ENCODE measurements at regions of chr15 and their contacts with region 1.

Region 1: DNA sequence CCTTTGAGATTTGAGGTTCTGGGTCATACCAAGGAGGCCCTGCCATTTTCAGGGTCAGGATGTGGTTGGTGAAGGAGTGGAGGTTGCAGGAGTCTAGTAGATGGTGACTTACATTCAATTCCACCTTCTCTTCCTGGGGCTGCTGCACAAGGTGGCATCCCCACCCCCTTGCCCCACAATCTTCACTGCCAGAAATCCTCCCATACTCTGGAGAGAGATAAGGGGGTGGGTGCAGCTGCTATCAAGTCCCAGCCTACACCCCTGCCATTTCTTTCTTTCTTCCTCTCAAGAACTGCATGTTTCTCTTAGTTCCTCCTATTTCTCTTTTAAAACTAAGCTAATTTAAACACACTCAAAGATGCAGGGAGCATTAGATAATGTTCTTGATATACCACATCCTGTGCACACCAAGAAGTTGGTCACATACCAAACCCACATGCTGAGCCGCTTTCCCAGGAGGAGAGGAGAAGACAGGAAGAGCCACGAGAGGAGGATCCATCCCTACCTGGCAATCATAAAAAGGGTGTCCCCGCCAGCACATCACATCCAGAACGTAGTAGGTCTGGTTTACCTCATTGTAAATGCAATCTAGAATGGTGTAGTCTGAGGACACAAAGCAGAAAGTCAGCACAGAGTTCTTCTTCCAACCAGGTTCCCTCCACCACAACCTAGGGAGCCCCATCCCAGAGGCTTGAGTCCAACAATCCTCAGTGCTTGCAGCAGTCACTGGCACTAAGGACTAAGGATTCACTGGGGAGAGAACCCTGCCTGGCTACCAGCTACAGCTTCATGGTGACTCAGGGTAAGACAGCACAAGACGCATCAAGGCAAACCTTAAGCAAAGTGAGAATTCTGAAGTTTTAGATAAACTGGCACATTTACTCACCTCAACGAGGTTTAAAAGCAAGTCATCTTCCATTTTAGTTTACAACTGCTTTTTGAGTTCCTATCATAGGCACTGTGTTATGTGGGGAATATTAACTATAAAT is 18.5 kb downstream of the SNUPN start:
- DNase-seq: peak; percentile 15
- H3K4me3 Mint-ChIP-seq: peak overlapping the region; percentile 64
- H3K27ac Mint-ChIP-seq: peak overlapping the region; percentile 85
- H3K4me1 Mint-ChIP-seq: peaks cover 41% of the 10 kb centered on the region
- H3K27me3 Mint-ChIP-seq: no peaks in the 10 kb centered on the region

Region 2: GRCh38 chr15:75625542-75626347 is 18.7 kb after region 1 on chr15 and contains the start of gene SNUPN:
- intact Hi-C with region 1: loop called (anchors 2 kb)
- DNase-seq: peak; percentile 90
- H3K4me3 Mint-ChIP-seq: peak within 1 kb of the TSS; percentile 94
- H3K27ac Mint-ChIP-seq: peak within 1 kb of the TSS; percentile 100
- H3K4me1 Mint-ChIP-seq: peaks cover 38% of the 10 kb centered on the region
- H3K27me3 Mint-ChIP-seq: no peaks in the 10 kb centered on the region
- total RNA-seq, gene SNUPN: 30.8 and 34.1 TPM in 2 replicates

Region 3: GRCh38 chr15:75661091-75661777 is 54.2 kb after region 1 on chr15:
- intact Hi-C with region 1: no loop called
- DNase-seq: no peak
- H3K4me3 Mint-ChIP-seq: no peak overlapping the region
- H3K27ac Mint-ChIP-seq: no peak overlapping the region
- H3K4me1 Mint-ChIP-seq: no peaks in the 10 kb centered on the region
- H3K27me3 Mint-ChIP-seq: no peaks in the 10 kb centered on the region